CD8-positive, alpha-beta T cell (primary cell): ENCODE measurements at regions of chr15 and their contacts with region 1.

Region 1: GRCh38 chr15:56052395-56053045 is 59.1 kb upstream of the NEDD4 start:
- DNase-seq: peak in 2 of 9 experiments; percentile 58 to 67
- ATAC-seq: peak; percentile 74
- H3K4me3 ChIP-seq: no peak overlapping the region
- H3K4me3 Mint-ChIP-seq: no peak overlapping the region
- H3K27ac ChIP-seq: no peak overlapping the region
- H3K27ac Mint-ChIP-seq: no peak overlapping the region
- H3K4me1 ChIP-seq: no peaks in the 10 kb centered on the region
- H3K4me1 Mint-ChIP-seq: no peaks in the 10 kb centered on the region
- H3K27me3 ChIP-seq: no peaks in the 10 kb centered on the region
- H3K27me3 Mint-ChIP-seq: no peaks in the 10 kb centered on the region
- CTCF ChIP-seq: peak; percentile 97

Region 2: DNA sequence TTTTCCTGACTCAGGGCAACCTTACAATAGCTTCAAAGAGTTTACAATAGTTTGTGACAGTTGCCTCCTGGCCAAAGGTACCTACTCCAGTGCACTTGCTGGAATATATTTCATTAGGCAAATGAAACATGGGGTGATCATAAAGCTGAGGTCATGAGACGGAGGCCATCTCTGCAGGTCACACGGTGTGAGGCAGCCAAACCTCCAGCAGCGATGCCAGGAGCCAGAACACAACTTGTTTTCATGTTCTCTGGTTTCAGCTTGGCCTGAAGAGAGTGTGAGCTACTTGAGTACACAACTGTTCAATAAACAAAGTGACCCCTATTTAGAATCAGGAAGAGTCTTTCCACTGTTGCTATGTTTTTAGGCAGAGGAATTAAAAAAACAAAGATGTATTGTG is 421.7 kb before region 1 on chr15:
- CTCF ChIA-PET with region 1: no interaction called
- POLR2A ChIA-PET with region 1: no interaction called
- intact Hi-C with region 1: no loop called
- DNase-seq: no peak
- ATAC-seq: no peak
- H3K4me3 ChIP-seq: no peak overlapping the region
- H3K4me3 Mint-ChIP-seq: no peak overlapping the region
- H3K27ac ChIP-seq: no peak overlapping the region
- H3K27ac Mint-ChIP-seq: no peak overlapping the region
- H3K4me1 ChIP-seq: no peaks in the 10 kb centered on the region
- H3K4me1 Mint-ChIP-seq: no peaks in the 10 kb centered on the region
- H3K27me3 ChIP-seq: no peaks in the 10 kb centered on the region
- H3K27me3 Mint-ChIP-seq: peaks cover 2% of the 10 kb centered on the region
- CTCF ChIP-seq: no peak

Region 3: GRCh38 chr15:55649054-55649423 is 403.5 kb before region 1 on chr15:
- CTCF ChIA-PET with region 1: interaction called, 19 read pairs
- POLR2A ChIA-PET with region 1: no interaction called
- intact Hi-C with region 1: loop called in 1 of 2 experiments (anchors 1 kb)
- DNase-seq: no peak
- ATAC-seq: no peak
- H3K4me3 ChIP-seq: no peak overlapping the region
- H3K4me3 Mint-ChIP-seq: no peak overlapping the region
- H3K27ac ChIP-seq: no peak overlapping the region
- H3K27ac Mint-ChIP-seq: no peak overlapping the region
- H3K4me1 ChIP-seq: no peaks in the 10 kb centered on the region
- H3K4me1 Mint-ChIP-seq: no peaks in the 10 kb centered on the region
- H3K27me3 ChIP-seq: no peaks in the 10 kb centered on the region
- H3K27me3 Mint-ChIP-seq: peaks cover 2% of the 10 kb centered on the region
- CTCF ChIP-seq: no peak

Region 4: DNA sequence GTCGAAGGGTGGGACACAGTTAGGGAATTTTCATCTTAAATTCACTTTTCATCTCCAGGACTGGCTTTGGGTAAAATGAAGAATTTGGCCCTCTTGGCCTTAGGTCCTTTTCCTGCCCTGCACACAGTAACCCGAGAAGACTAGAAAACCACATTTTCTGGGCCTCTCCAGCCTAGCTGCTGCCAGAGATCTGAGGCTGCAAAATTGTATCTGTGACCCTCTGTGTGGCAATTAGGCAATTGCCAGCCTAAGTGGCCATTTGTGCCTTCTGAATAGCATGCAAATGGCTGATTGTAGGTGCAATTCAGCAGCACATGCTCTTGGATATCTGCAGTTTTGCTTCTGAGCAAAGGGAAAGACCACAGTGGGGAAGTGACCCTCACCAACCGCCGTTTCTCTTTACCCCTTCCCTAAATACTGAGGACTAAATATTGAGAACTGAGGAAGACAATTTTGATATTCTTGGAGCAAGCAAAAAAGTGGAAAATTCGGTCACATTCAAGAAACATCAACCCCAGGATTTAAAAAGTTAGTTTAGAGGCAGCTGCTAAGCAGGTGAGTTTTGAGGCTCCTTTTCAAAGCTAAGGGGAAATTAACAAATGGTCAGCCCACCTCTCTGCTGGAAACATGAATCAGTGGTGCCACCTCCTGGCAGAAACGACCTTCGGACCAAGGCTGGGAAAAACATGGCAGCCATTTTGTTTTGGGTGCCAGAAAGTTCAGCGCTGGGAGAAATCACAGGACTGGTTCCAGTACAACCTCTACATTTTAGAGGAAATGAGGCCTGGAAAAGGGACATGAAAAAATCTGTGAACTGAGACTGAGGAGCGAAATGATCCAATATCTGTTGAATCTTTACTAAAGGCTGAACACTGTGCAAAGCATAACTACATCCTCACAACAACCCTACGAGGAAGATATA is 253.0 kb before region 1 on chr15:
- CTCF ChIA-PET with region 1: no interaction called
- POLR2A ChIA-PET with region 1: no interaction called
- intact Hi-C with region 1: loop called in 1 of 2 experiments (anchors 10 kb)
- DNase-seq: peak in 1 of 9 experiments; percentile 20
- ATAC-seq: no peak
- H3K4me3 ChIP-seq: no peak overlapping the region
- H3K4me3 Mint-ChIP-seq: no peak overlapping the region
- H3K27ac ChIP-seq: no peak overlapping the region
- H3K27ac Mint-ChIP-seq: no peak overlapping the region
- H3K4me1 ChIP-seq: no peaks in the 10 kb centered on the region
- H3K4me1 Mint-ChIP-seq: no peaks in the 10 kb centered on the region
- H3K27me3 ChIP-seq: no peaks in the 10 kb centered on the region
- H3K27me3 Mint-ChIP-seq: peaks cover 20% of the 10 kb centered on the region
- CTCF ChIP-seq: no peak

Region 5: GRCh38 chr15:55917881-55918296 is 134.6 kb before region 1 on chr15:
- CTCF ChIA-PET with region 1: interaction called, 5 read pairs
- POLR2A ChIA-PET with region 1: no interaction called
- intact Hi-C with region 1: loop called (anchors 5 kb)
- DNase-seq: peak in 2 of 9 experiments; percentile 33 to 40
- ATAC-seq: no peak
- H3K4me3 ChIP-seq: no peak overlapping the region
- H3K4me3 Mint-ChIP-seq: no peak overlapping the region
- H3K27ac ChIP-seq: no peak overlapping the region
- H3K27ac Mint-ChIP-seq: no peak overlapping the region
- H3K4me1 ChIP-seq: no peaks in the 10 kb centered on the region
- H3K4me1 Mint-ChIP-seq: peaks cover 2% of the 10 kb centered on the region
- H3K27me3 ChIP-seq: no peaks in the 10 kb centered on the region
- H3K27me3 Mint-ChIP-seq: no peaks in the 10 kb centered on the region
- CTCF ChIP-seq: peak; percentile 57

Region 6: DNA sequence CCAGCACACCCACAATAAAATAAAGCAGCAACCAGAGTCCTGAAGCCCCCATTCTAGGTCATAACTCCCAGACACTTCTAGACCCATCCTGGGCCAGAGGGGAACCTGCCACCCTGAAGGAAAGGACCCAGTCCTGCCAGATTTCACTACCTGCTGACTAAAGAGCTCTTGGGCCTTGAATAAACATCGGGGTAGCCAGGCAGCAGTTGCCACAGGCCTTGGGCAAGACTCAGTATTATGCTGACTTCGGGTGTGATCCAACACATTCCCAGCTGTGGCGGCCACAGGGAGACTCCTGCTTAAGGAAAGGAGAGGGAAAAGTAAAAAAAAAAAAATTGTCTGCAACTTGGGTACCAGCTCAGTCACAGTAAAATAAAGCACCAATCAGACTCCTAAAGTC is 83.0 kb before region 1 on chr15:
- CTCF ChIA-PET with region 1: no interaction called
- POLR2A ChIA-PET with region 1: no interaction called
- intact Hi-C with region 1: no loop called
- DNase-seq: no peak
- ATAC-seq: no peak
- H3K4me3 ChIP-seq: no peak overlapping the region
- H3K4me3 Mint-ChIP-seq: no peak overlapping the region
- H3K27ac ChIP-seq: no peak overlapping the region
- H3K27ac Mint-ChIP-seq: no peak overlapping the region
- H3K4me1 ChIP-seq: no peaks in the 10 kb centered on the region
- H3K4me1 Mint-ChIP-seq: no peaks in the 10 kb centered on the region
- H3K27me3 ChIP-seq: no peaks in the 10 kb centered on the region
- H3K27me3 Mint-ChIP-seq: no peaks in the 10 kb centered on the region
- CTCF ChIP-seq: no peak

Region 7: GRCh38 chr15:55993111-55993803 is 59.3 kb before region 1 on chr15 and contains the start of gene NEDD4:
- CTCF ChIA-PET with region 1: interaction called, 16 read pairs
- POLR2A ChIA-PET with region 1: no interaction called
- intact Hi-C with region 1: loop called (anchors 2 kb)
- DNase-seq: peak; percentile 28 to 87 (median 69)
- ATAC-seq: peak; percentile 81
- H3K4me3 ChIP-seq: peak within 1 kb of the TSS; percentile 77 to 90
- H3K4me3 Mint-ChIP-seq: peak within 1 kb of the TSS; percentile 92
- H3K27ac ChIP-seq: no peak within 1 kb of the TSS
- H3K27ac Mint-ChIP-seq: peak within 1 kb of the TSS; percentile 25
- H3K4me1 ChIP-seq: peaks cover 5% of the 10 kb centered on the region
- H3K4me1 Mint-ChIP-seq: peaks cover 13% of the 10 kb centered on the region
- H3K27me3 ChIP-seq: no peaks in the 10 kb centered on the region
- H3K27me3 Mint-ChIP-seq: no peaks in the 10 kb centered on the region
- CTCF ChIP-seq: no peak
- total RNA-seq, gene NEDD4: 0.89 to 1.4 TPM

Region 8: GRCh38 chr15:56040081-56041035 is 12.2 kb before region 1 on chr15:
- CTCF ChIA-PET with region 1: interaction called, 13 read pairs
- POLR2A ChIA-PET with region 1: no interaction called
- intact Hi-C with region 1: no loop called
- DNase-seq: peak in 2 of 9 experiments; percentile 24 to 31
- ATAC-seq: no peak
- H3K4me3 ChIP-seq: no peak overlapping the region
- H3K4me3 Mint-ChIP-seq: no peak overlapping the region
- H3K27ac ChIP-seq: no peak overlapping the region
- H3K27ac Mint-ChIP-seq: no peak overlapping the region
- H3K4me1 ChIP-seq: peaks cover 38% of the 10 kb centered on the region
- H3K4me1 Mint-ChIP-seq: peaks cover 45% of the 10 kb centered on the region
- H3K27me3 ChIP-seq: no peaks in the 10 kb centered on the region
- H3K27me3 Mint-ChIP-seq: no peaks in the 10 kb centered on the region
- CTCF ChIP-seq: no peak